ENCODE measurements at regions of chr17 and their contacts with region 1.

Region 1: GRCh38 chr17:17792551-17793377 is 44.0 kb downstream of the SREBF1 start:
- DNase-seq: peak in 3 of 5 donors; percentile 48 to 66 (median 61)
- ATAC-seq: peak; percentile 39 to 61 (median 47)
- H3K4me3 ChIP-seq: peak overlapping the region in 4 of 12 donors; percentile 6 to 30 (median 18)
- H3K27ac ChIP-seq: peak overlapping the region in 11 of 12 donors; percentile 43 to 71 (median 63)
- H3K4me1 ChIP-seq: peaks cover 14 to 55% (median 48%) of the 10 kb centered on the region in 12 donors
- H3K27me3 ChIP-seq: no peaks in the 10 kb centered on the region
- CTCF ChIP-seq: no peak
- POLR2A ChIP-seq: no peak

Region 2: DNA sequence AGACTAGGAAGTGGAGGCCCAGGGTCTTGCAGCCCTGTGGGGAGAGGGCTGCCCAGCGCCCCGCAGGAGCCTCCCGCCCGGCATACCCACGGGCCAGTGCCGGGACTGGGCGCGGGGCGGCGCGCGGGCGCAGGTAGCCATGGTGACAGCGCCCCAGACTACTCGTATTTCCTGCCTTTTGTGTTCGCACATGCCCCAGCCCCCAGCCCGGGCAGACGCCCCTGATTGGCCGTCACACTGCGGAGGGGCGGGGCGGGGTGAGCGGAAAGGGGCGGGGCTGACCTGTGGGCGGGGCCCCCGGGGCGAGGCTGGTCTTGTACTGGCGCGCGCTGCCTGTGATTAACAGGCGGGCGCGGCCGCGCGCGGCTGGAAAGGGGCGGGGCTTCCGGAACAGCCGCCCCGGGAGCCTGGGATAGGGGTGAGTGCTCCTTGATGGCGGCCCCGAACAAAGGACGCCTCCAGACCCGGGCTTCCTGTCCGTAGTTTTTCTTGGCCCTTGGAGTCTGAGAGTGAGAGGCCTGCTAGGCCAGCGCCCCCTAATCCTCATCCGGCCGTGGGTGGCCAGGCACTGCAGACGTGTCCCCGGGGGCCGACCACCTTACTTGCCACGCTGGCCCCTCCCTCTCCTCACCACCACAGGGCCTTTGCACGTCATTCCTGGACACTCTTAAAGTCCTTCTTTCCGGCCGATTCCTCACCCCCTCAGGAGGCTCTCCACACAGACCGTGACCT is 40.5 kb before region 1 on chr17:
- intact Hi-C with region 1: loop called in 2 of 10 experiments (anchors 5 kb)
- DNase-seq: peak; percentile 95 to 98 (median 96)
- ATAC-seq: peak; percentile 83 to 90 (median 89)
- H3K4me3 ChIP-seq: peak overlapping the region in 11 of 12 donors; percentile 8 to 61 (median 49)
- H3K27ac ChIP-seq: peak overlapping the region; percentile 67 to 93 (median 85)
- H3K4me1 ChIP-seq: peaks cover 3 to 93% (median 49%) of the 10 kb centered on the region in 12 donors
- H3K27me3 ChIP-seq: no peaks in the 10 kb centered on the region
- CTCF ChIP-seq: peak in 9 of 12 donors; percentile 10 to 45 (median 26)
- POLR2A ChIP-seq: peak in 1 of 2 donors; percentile 51

Measured in heart left ventricle (tissue), 16 donors.